ENCODE measurements at regions of chr1 and their contacts with region 1.

Region 1: DNA sequence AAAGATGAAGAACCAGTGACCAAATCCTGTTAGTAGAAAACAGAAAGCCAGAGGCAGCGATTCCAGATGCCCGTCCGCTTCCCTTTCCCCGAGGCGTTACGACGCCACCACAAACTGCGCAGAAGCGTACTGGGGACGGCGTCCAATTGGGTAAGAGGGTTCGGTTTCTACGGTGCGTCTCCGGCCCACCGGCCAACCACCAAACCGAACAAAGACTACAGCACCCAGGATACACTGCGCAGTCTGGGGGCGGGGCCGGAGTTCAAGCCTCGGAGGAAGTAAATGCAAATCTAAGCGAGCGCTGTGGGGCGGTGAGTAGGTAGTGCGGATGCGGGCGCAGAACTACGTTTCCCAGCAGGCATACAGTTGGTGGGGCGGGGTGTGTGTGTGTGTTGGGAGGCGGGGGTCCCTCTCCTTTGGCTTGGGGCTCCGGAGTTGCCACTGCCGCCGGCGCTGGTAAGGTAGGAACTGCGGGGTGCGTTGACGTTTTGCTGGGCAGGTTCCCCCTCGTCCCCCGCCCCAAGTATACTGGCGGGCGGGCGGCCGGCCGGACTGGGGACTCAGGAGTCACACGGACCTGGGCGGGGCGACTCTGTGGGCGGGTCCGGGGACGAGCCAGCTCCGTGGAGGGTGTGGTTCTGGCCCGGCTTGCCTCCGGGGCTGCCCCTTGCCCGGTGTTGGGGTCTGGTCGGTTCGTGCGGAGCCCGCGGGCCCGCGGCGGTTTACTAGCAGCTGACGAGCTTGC is at the starts of genes SWT1 and TRMT1L:
- DNase-seq: peak; percentile 100
- ATAC-seq: peak; percentile 83
- H3K4me3 ChIP-seq: peak within 1 kb of the TSS; percentile 80 to 99 (median 98)
- H3K4me3 Mint-ChIP-seq: peak within 1 kb of the TSS; percentile 93
- H3K27ac ChIP-seq: peak within 1 kb of the TSS; percentile 98 to 100
- H3K27ac Mint-ChIP-seq: peak within 1 kb of the TSS; percentile 97
- H3K4me1 ChIP-seq: peaks cover 11 to 36% of the 10 kb centered on the region in 2 donors
- H3K4me1 Mint-ChIP-seq: peaks cover 44% of the 10 kb centered on the region
- H3K27me3 ChIP-seq: no peaks in the 10 kb centered on the region
- H3K27me3 Mint-ChIP-seq: no peaks in the 10 kb centered on the region
- CTCF ChIP-seq: no peak
- total RNA-seq, gene SWT1: 8.5 and 9.2 TPM in 2 replicates
- total RNA-seq, gene TRMT1L: 27.5 and 33.2 TPM in 2 replicates

Region 2: DNA sequence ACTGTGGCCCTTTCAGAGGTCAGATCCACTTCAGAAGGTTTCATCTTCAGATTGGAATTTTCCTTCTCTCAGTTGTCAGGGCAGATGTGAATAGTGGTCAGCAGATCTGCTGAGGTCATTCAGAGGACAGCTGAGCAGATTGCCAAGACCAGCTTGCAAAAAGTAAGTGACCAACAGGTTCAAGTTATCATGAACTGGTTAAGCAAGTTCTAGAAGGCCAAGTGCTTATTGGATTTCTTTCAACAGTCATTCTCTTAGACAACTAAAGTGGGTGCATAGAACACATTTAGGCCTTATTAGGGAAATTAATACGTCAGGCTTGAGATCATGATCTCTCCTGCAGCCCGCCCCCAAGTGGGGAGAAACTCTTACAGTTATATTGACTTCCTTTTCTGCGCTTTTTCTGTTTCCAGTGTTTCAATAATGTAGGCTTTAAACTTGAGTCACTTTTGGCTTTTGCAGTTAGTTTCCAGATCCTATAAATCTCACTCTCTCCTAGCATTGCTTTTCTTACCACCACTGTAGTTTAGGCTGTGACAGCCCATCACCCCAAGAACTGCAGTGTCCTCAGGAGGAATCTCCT is 673.8 kb before region 1 on chr1:
- CTCF ChIA-PET with region 1: no interaction called
- POLR2A ChIA-PET with region 1: no interaction called
- intact Hi-C with region 1: no loop called
- DNase-seq: no peak
- ATAC-seq: no peak
- H3K4me3 ChIP-seq: no peak overlapping the region
- H3K4me3 Mint-ChIP-seq: no peak overlapping the region
- H3K27ac ChIP-seq: no peak overlapping the region
- H3K27ac Mint-ChIP-seq: no peak overlapping the region
- H3K4me1 ChIP-seq: no peaks in the 10 kb centered on the region
- H3K4me1 Mint-ChIP-seq: no peaks in the 10 kb centered on the region
- H3K27me3 ChIP-seq: no peaks in the 10 kb centered on the region
- H3K27me3 Mint-ChIP-seq: no peaks in the 10 kb centered on the region
- CTCF ChIP-seq: no peak

Region 3: GRCh38 chr1:184973272-184974055 is 183.6 kb before region 1 on chr1:
- CTCF ChIA-PET with region 1: interaction called, 3 read pairs
- POLR2A ChIA-PET with region 1: interaction called, 3 read pairs
- intact Hi-C with region 1: loop called (anchors 5 kb)
- DNase-seq: peak; percentile 69
- ATAC-seq: peak; percentile 39
- H3K4me3 ChIP-seq: peak overlapping the region; percentile 57 to 85 (median 61)
- H3K4me3 Mint-ChIP-seq: peak overlapping the region; percentile 96
- H3K27ac ChIP-seq: peak overlapping the region; percentile 21 to 54
- H3K27ac Mint-ChIP-seq: peak overlapping the region; percentile 85
- H3K4me1 ChIP-seq: peaks cover 5 to 17% of the 10 kb centered on the region in 2 donors
- H3K4me1 Mint-ChIP-seq: peaks cover 40% of the 10 kb centered on the region
- H3K27me3 ChIP-seq: peaks cover 0 to 11% (median 9%) of the 10 kb centered on the region in 4 experiments
- H3K27me3 Mint-ChIP-seq: peaks cover 10% of the 10 kb centered on the region
- CTCF ChIP-seq: no peak

Region 4: DNA sequence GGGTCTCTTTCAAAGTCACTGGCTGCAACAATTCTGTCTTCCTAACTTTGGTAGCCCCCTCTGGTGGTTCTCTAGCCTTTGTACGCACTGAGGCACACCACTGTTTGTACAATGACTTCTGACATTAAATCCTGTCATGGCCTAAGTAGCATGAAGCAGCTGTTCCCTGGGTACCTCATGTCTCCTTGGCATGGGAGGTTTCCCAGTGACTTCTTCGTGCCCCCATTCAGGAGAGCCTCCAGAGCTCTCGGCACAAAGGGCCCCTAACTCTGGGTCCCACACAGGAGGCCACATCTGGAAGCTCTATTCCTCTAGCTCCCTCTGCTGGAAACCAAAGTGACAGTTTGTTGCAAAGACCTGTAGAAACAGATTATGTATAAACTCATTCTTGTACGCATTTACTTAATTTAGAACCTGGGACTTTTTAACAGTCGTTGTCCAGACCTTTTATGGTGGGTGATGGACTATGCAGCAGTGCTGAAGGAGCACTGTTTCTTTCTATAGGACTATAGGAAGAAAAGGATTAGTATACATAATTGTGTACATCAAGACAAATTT is 13.3 kb after region 1 on chr1:
- CTCF ChIA-PET with region 1: interaction called, 54 read pairs
- POLR2A ChIA-PET with region 1: no interaction called
- intact Hi-C with region 1: no loop called
- DNase-seq: peak; percentile 79
- ATAC-seq: peak; percentile 81
- H3K4me3 ChIP-seq: no peak overlapping the region
- H3K4me3 Mint-ChIP-seq: no peak overlapping the region
- H3K27ac ChIP-seq: peak overlapping the region in 1 of 2 donors; percentile 3
- H3K27ac Mint-ChIP-seq: no peak overlapping the region
- H3K4me1 ChIP-seq: peaks cover 0 to 6% of the 10 kb centered on the region in 2 donors
- H3K4me1 Mint-ChIP-seq: peaks cover 4% of the 10 kb centered on the region
- H3K27me3 ChIP-seq: no peaks in the 10 kb centered on the region
- H3K27me3 Mint-ChIP-seq: no peaks in the 10 kb centered on the region
- CTCF ChIP-seq: peak; percentile 84

Region 5: DNA sequence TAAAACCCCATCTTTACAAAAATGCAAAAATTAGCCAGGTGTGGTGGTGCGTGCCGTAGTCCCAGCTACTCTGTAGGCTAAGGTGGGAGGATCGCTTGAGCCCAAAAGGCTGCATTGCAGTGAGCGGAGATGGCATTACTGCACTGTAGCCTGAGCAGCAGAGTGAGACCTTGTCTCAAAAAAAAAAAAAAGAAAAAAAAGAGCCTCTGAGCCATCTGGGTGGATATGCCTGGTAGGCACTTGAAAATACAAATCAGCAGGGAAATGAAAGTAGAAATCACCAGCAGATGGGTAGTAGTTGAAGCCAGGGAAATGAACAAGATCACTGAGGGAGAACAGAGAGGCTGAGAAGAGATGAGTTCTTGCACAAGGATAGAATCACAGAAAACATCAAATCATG is 446.1 kb after region 1 on chr1:
- CTCF ChIA-PET with region 1: no interaction called
- POLR2A ChIA-PET with region 1: no interaction called
- intact Hi-C with region 1: loop called (anchors 2 kb)
- DNase-seq: peak; percentile 86
- ATAC-seq: peak; percentile 93
- H3K4me3 ChIP-seq: peak overlapping the region in 1 of 5 experiments; percentile 42
- H3K4me3 Mint-ChIP-seq: no peak overlapping the region
- H3K27ac ChIP-seq: peak overlapping the region; percentile 27 to 56
- H3K27ac Mint-ChIP-seq: no peak overlapping the region
- H3K4me1 ChIP-seq: peaks cover 54 to 68% of the 10 kb centered on the region in 2 donors
- H3K4me1 Mint-ChIP-seq: peaks cover 31% of the 10 kb centered on the region
- H3K27me3 ChIP-seq: no peaks in the 10 kb centered on the region
- H3K27me3 Mint-ChIP-seq: no peaks in the 10 kb centered on the region
- CTCF ChIP-seq: no peak

Measured in B cell (primary cell).